CD8-positive, alpha-beta T cell (primary cell): ENCODE measurements at regions of chr12 and their contacts with region 1.

Region 1: GRCh38 chr12:6470375-6471163 is at the start of gene VAMP1:
- DNase-seq: peak; percentile 94 to 98 (median 97)
- ATAC-seq: peak; percentile 88
- H3K4me3 ChIP-seq: peak within 1 kb of the TSS; percentile 88 to 89
- H3K4me3 Mint-ChIP-seq: peak within 1 kb of the TSS; percentile 92
- H3K27ac ChIP-seq: peak within 1 kb of the TSS; percentile 79 to 84
- H3K27ac Mint-ChIP-seq: peak within 1 kb of the TSS; percentile 90
- H3K4me1 ChIP-seq: peaks cover 42% of the 10 kb centered on the region
- H3K4me1 Mint-ChIP-seq: peaks cover 47% of the 10 kb centered on the region
- H3K27me3 ChIP-seq: no peaks in the 10 kb centered on the region
- H3K27me3 Mint-ChIP-seq: no peaks in the 10 kb centered on the region
- CTCF ChIP-seq: no peak
- total RNA-seq, gene VAMP1: 43.9 to 50.9 TPM

Region 2: DNA sequence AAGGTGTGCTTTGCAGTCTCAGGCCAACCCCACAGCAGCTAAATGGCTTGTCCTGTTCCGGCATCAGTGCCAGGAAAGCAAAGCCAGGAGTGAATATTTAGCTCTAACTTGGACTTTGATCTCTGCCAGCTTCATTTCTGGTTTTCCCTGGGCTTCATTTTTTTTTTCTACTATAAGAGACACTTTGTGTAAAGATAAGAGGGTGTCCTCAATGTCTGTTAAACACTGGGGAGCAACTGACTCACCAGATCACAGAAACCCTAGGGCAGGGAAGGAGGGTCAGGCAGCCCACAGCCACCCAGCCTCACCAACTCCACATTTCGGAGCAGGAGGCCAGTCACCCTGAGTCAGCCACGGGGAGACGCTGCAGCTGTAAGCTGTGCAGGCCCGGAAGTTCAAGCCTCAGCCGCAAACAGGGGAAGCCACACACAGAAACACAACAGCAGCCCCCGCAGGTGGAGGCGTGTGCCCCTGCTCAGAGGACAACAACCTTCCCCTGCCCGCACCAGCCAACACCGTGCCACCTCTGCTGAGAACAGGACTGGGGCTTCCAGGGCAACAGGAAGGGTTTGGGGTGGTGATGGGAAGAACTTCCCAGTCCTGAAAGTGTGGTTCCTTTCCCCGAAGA is 135.0 kb before region 1 on chr12:
- CTCF ChIA-PET with region 1: interaction called, 36 read pairs
- POLR2A ChIA-PET with region 1: interaction called, 34 read pairs
- intact Hi-C with region 1: loop called (anchors 1 to 2 kb)
- DNase-seq: peak; percentile 68 to 95 (median 89)
- ATAC-seq: peak; percentile 68
- H3K4me3 ChIP-seq: peak overlapping the region; percentile 77 to 99
- H3K4me3 Mint-ChIP-seq: no peak overlapping the region
- H3K27ac ChIP-seq: peak overlapping the region; percentile 61 to 87
- H3K27ac Mint-ChIP-seq: no peak overlapping the region
- H3K4me1 ChIP-seq: peaks cover 82% of the 10 kb centered on the region
- H3K4me1 Mint-ChIP-seq: peaks cover 53% of the 10 kb centered on the region
- H3K27me3 ChIP-seq: no peaks in the 10 kb centered on the region
- H3K27me3 Mint-ChIP-seq: no peaks in the 10 kb centered on the region
- CTCF ChIP-seq: peak; percentile 71

Region 3: DNA sequence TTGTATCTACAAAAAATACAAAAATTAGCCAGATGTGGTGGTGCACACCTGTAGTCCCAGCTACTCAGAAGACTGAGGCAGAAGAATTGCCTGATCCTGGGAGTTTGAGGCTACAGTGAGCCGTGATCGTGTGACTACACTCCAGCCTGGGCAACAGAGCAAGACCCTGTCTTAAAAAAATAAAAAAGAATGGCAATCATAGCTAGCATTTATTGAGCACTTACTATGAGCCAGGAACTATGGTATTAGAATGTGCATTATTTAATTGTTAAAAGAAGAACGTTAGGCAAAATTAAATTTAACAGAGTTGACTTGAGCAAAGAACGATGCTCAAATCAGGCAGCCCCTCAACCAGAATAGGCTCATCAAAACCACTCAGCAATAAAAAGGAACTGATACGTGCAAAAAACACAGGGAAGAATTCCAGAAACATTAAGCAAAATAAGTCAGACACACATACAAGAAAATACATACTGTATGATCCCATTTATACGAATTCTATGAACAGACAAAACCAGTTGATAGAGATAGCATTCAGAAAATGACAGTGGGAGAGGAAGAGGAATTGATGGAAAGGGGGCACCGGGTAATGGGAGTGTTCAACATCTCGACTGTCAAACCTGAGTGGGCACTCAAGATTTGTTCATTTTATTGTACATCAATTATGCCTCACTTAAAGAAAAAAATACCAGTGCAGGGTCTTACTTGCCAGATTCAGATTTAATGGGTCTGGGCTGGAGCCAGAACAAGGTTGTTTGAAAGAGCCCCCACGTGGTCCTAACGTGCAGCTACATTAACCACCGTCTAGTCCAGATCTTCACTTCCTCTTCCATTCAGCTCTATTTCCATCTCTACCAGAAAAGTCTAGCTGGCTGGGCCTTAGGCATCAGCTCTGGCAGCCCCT is 103.3 kb before region 1 on chr12:
- CTCF ChIA-PET with region 1: interaction called, 10 read pairs
- POLR2A ChIA-PET with region 1: no interaction called
- intact Hi-C with region 1: no loop called
- DNase-seq: peak in 7 of 9 experiments; percentile 34 to 81 (median 54)
- ATAC-seq: peak; percentile 66
- H3K4me3 ChIP-seq: no peak overlapping the region
- H3K4me3 Mint-ChIP-seq: peak overlapping the region; percentile 26
- H3K27ac ChIP-seq: peak overlapping the region in 1 of 2 experiments; percentile 51
- H3K27ac Mint-ChIP-seq: peak overlapping the region; percentile 69
- H3K4me1 ChIP-seq: peaks cover 25% of the 10 kb centered on the region
- H3K4me1 Mint-ChIP-seq: peaks cover 37% of the 10 kb centered on the region
- H3K27me3 ChIP-seq: no peaks in the 10 kb centered on the region
- H3K27me3 Mint-ChIP-seq: no peaks in the 10 kb centered on the region
- CTCF ChIP-seq: no peak

Region 4: GRCh38 chr12:6443361-6443983 is 27.1 kb before region 1 on chr12:
- CTCF ChIA-PET with region 1: interaction called, 64 read pairs
- POLR2A ChIA-PET with region 1: interaction called, 315 read pairs
- intact Hi-C with region 1: no loop called
- DNase-seq: peak in 4 of 9 experiments; percentile 44 to 65 (median 48)
- ATAC-seq: peak; percentile 30
- H3K4me3 ChIP-seq: peak overlapping the region in 1 of 2 experiments; percentile 2
- H3K4me3 Mint-ChIP-seq: peak overlapping the region; percentile 99
- H3K27ac ChIP-seq: peak overlapping the region; percentile 19 to 58
- H3K27ac Mint-ChIP-seq: peak overlapping the region; percentile 93
- H3K4me1 ChIP-seq: peaks cover 38% of the 10 kb centered on the region
- H3K4me1 Mint-ChIP-seq: peaks cover 67% of the 10 kb centered on the region
- H3K27me3 ChIP-seq: no peaks in the 10 kb centered on the region
- H3K27me3 Mint-ChIP-seq: no peaks in the 10 kb centered on the region
- CTCF ChIP-seq: no peak

Region 5: DNA sequence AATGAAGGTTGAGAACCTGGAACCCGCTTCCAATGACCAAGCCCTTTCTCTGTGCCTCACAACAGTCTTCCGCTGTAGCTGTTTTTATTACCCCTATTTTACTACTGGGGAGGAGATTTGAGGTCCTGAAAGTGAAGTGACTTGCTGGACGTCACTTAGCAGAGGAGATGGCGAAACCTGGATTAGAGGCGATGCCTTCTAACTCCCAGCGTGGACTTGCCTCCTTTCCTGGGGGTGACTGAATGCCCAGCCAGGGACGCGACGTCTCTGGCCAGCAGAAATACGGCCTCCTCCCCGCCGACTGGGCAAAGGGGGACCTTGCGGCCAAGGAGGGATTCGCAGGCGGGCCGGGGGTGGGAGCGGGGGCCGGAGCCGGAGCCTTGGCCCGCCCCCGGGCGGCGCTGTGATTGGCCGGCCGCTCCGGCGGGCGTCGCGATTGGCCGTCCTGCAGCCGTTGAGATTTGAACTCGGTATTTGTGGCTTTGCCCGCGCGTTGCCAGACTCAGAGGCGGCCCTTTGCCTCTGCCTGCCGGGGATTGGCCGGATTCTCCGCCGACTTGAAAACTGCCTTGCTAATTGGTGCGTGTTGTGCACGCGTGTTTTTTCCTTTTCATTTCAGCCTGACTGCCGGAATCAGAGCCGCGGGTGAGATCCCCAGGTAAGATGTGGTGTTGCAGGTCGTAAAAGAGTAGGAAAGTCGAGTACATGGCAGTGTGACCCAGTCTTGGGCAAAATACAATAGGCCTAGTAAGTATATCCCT is 23.1 kb after region 1 on chr12 and contains the start of gene NCAPD2:
- CTCF ChIA-PET with region 1: interaction called, 11 read pairs
- POLR2A ChIA-PET with region 1: interaction called, 40 read pairs
- intact Hi-C with region 1: loop called (anchors 1 kb)
- DNase-seq: peak; percentile 88 to 98 (median 94)
- ATAC-seq: peak; percentile 80
- H3K4me3 ChIP-seq: peak within 1 kb of the TSS; percentile 86 to 93
- H3K4me3 Mint-ChIP-seq: peak within 1 kb of the TSS; percentile 96
- H3K27ac ChIP-seq: peak within 1 kb of the TSS; percentile 72 to 93
- H3K27ac Mint-ChIP-seq: peak within 1 kb of the TSS; percentile 98
- H3K4me1 ChIP-seq: peaks cover 26% of the 10 kb centered on the region
- H3K4me1 Mint-ChIP-seq: peaks cover 41% of the 10 kb centered on the region
- H3K27me3 ChIP-seq: no peaks in the 10 kb centered on the region
- H3K27me3 Mint-ChIP-seq: no peaks in the 10 kb centered on the region
- CTCF ChIP-seq: no peak
- total RNA-seq, gene NCAPD2: 11.7 to 13.4 TPM

Region 6: DNA sequence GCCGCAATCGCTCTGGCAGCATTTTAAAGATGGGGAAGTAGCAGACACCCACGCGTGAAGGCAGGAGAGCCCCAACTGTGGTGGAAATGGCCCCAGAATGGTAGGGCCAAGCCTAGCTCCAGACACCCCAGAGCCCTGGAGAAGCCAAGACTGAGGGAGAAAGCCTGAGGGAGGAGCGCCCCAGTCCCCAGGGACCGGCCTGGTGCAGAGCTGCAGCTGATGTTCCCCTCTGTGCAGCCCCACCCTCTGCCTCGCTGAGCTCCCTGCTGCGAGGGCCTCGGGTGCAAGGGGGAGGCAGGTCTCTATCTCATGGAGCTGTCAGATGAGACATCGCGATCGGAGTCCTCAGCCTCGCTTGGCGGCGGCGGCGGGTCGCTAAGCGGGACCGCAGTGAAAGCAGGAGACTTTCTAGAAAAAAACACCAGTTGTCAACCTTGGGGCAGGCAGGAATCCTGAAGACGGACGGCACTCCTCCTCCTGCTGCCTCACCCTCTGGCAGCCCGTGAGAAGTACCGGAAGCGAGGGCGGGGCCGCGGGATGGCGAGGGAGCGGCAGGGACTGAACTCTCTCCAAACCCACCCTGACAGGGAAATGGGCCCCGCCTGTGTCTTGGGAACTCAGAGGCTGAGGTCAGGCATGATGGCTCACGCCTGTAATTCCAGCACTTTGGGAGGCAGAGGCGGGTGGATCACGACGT is 69.8 kb after region 1 on chr12:
- CTCF ChIA-PET with region 1: interaction called, 56 read pairs
- POLR2A ChIA-PET with region 1: interaction called, 81 read pairs
- intact Hi-C with region 1: loop called (anchors 1 kb)
- DNase-seq: peak in 6 of 9 experiments; percentile 38 to 59 (median 47)
- ATAC-seq: no peak
- H3K4me3 ChIP-seq: peak overlapping the region in 1 of 2 experiments; percentile 37
- H3K4me3 Mint-ChIP-seq: peak overlapping the region; percentile 75
- H3K27ac ChIP-seq: no peak overlapping the region
- H3K27ac Mint-ChIP-seq: peak overlapping the region; percentile 73
- H3K4me1 ChIP-seq: peaks cover 36% of the 10 kb centered on the region
- H3K4me1 Mint-ChIP-seq: peaks cover 44% of the 10 kb centered on the region
- H3K27me3 ChIP-seq: no peaks in the 10 kb centered on the region
- H3K27me3 Mint-ChIP-seq: no peaks in the 10 kb centered on the region
- CTCF ChIP-seq: no peak